A673 (cell line): ENCODE measurements at regions of chr7 and their contacts with region 1.

Region 1: GRCh38 chr7:120184866-120185265 is 88.1 kb upstream of the KCND2 start:
- DNase-seq: no peak
- H3K4me3 ChIP-seq: no peak overlapping the region
- H3K27ac ChIP-seq: no peak overlapping the region
- H3K4me1 ChIP-seq: peaks cover 4% of the 10 kb centered on the region
- H3K27me3 ChIP-seq: no peaks in the 10 kb centered on the region
- CTCF ChIP-seq: no peak

Region 2: GRCh38 chr7:118711688-118712087 is 1473.2 kb before region 1 on chr7:
- CTCF ChIA-PET with region 1: interaction called, 12 read pairs
- POLR2A ChIA-PET with region 1: no interaction called
- intact Hi-C with region 1: no loop called
- DNase-seq: no peak
- H3K4me3 ChIP-seq: no peak overlapping the region
- H3K27ac ChIP-seq: no peak overlapping the region
- H3K4me1 ChIP-seq: no peaks in the 10 kb centered on the region
- H3K27me3 ChIP-seq: no peaks in the 10 kb centered on the region
- CTCF ChIP-seq: no peak

Region 3: GRCh38 chr7:120079704-120080103 is 105.2 kb before region 1 on chr7:
- CTCF ChIA-PET with region 1: no interaction called
- POLR2A ChIA-PET with region 1: no interaction called
- intact Hi-C with region 1: no loop called
- DNase-seq: no peak
- H3K4me3 ChIP-seq: no peak overlapping the region
- H3K27ac ChIP-seq: no peak overlapping the region
- H3K4me1 ChIP-seq: no peaks in the 10 kb centered on the region
- H3K27me3 ChIP-seq: no peaks in the 10 kb centered on the region
- CTCF ChIP-seq: no peak